Psoas muscle (tissue), 8 donors: ENCODE measurements at regions of chr17 and their contacts with region 1.

Region 1: GRCh38 chr17:63406689-63407330 is 39.3 kb downstream of the CYB561 start:
- DNase-seq: no peak
- ATAC-seq: peak; percentile 81 to 96 (median 86)
- H3K4me3 ChIP-seq: no peak overlapping the region
- H3K27ac ChIP-seq: no peak overlapping the region
- H3K4me1 ChIP-seq: no peaks in the 10 kb centered on the region
- H3K27me3 ChIP-seq: no peaks in the 10 kb centered on the region
- CTCF ChIP-seq: peak; percentile 83

Region 2: GRCh38 chr17:62703775-62704378 is 702.9 kb before region 1 on chr17:
- intact Hi-C with region 1: loop called (anchors 2 to 5 kb)
- DNase-seq: peak; percentile 71 to 84
- ATAC-seq: peak; percentile 90 to 97 (median 94)
- H3K4me3 ChIP-seq: peak overlapping the region; percentile 71
- H3K27ac ChIP-seq: peak overlapping the region; percentile 36
- H3K4me1 ChIP-seq: peaks cover 5% of the 10 kb centered on the region
- H3K27me3 ChIP-seq: peaks cover 0 to 21% (median 0%) of the 10 kb centered on the region in 3 donors
- CTCF ChIP-seq: peak; percentile 81

Region 3: GRCh38 chr17:62725791-62726249 is 681.0 kb before region 1 on chr17:
- intact Hi-C with region 1: no loop called
- DNase-seq: no peak
- ATAC-seq: no peak
- H3K4me3 ChIP-seq: no peak overlapping the region
- H3K27ac ChIP-seq: no peak overlapping the region
- H3K4me1 ChIP-seq: peaks cover 3% of the 10 kb centered on the region
- H3K27me3 ChIP-seq: peaks cover 0 to 7% (median 3%) of the 10 kb centered on the region in 3 donors
- CTCF ChIP-seq: no peak

Region 4: GRCh38 chr17:62995377-62995885 is 411.4 kb before region 1 on chr17:
- intact Hi-C with region 1: loop called in 1 of 2 experiments (anchors 5 kb)
- DNase-seq: no peak
- ATAC-seq: no peak
- H3K4me3 ChIP-seq: no peak overlapping the region
- H3K27ac ChIP-seq: no peak overlapping the region
- H3K4me1 ChIP-seq: peaks cover 2% of the 10 kb centered on the region
- H3K27me3 ChIP-seq: no peaks in the 10 kb centered on the region
- CTCF ChIP-seq: peak; percentile 20

Region 5: DNA sequence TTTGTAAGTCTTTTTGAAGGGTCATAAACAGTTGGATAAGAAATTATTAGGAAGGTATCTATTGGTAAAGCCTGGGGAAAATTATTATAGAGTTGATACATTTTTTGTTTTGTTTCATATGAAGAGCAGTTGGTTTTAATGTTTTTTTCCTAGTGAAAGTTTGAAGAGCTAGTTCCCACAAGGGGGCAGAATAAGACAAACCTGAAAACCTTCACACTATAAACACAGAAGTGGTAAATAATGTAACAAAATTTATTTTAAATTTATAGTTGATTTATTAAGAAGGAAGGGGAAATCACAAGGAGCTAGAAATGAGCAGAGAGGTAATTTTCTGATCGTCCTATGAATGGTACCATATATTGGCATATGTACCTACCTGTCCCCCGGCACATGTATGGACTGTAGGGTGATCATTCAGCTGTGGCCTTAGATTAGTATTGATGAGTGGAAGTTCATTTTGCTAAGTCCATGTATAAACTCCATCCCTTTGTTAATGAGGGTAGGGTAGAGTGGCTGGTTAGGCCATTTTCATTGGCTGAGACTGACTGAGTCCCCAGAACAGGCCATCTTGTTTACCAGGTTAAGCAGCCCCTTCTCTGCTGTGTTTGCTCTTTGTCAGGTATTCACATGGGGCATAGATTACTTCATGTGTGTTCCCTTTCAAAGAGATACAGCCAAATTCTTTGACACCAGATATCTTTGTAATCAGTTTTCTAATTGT is 324.4 kb before region 1 on chr17:
- intact Hi-C with region 1: loop called in 1 of 2 experiments (anchors 2 kb)
- DNase-seq: no peak
- ATAC-seq: no peak
- H3K4me3 ChIP-seq: no peak overlapping the region
- H3K27ac ChIP-seq: no peak overlapping the region
- H3K4me1 ChIP-seq: no peaks in the 10 kb centered on the region
- H3K27me3 ChIP-seq: no peaks in the 10 kb centered on the region
- CTCF ChIP-seq: peak; percentile 21